ENCODE measurements at regions of chr12 and their contacts with region 1.

Region 1: DNA sequence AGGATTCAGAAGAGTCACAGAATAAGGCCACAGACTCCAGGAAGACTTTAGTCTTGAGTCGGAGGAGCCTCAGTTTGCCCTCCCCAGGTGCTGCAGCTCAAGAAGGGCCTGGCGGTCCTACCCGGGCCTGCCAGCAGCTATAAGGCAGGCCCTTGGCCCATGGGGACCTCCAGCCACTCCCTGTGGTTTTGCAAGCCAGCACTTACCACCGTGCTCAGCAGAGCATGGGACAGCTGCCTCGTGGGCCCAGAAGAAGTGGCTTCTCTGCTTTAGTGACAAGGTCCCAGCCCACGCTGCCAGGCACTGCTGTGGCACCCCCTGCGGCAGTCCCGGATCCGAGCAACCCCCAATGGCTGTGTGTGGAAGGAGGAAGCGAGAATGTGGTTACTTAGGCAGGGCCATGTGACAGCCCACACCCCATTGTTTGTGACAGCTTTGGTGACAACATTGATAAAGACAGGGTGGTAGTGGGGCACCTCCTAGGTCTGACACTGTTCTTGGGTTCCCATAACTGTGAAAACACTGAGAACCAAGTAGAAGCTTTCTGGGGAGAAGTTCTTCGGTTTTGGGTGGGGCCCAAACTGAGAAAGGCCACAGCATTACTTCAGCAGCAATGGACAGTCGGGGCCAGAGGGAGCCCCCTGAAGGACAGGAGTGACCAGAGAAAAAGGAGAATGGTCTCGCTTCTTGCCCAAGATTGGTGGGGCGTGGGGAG is at the start of gene SELPLG:
- DNase-seq: peak; percentile 82
- H3K4me3 Mint-ChIP-seq: peak within 1 kb of the TSS; percentile 94
- H3K27ac Mint-ChIP-seq: peak within 1 kb of the TSS; percentile 99
- H3K4me1 Mint-ChIP-seq: peaks cover 69% of the 10 kb centered on the region
- H3K27me3 Mint-ChIP-seq: no peaks in the 10 kb centered on the region
- total RNA-seq, gene SELPLG: 51.9 and 53.5 TPM in 2 replicates

Region 2: DNA sequence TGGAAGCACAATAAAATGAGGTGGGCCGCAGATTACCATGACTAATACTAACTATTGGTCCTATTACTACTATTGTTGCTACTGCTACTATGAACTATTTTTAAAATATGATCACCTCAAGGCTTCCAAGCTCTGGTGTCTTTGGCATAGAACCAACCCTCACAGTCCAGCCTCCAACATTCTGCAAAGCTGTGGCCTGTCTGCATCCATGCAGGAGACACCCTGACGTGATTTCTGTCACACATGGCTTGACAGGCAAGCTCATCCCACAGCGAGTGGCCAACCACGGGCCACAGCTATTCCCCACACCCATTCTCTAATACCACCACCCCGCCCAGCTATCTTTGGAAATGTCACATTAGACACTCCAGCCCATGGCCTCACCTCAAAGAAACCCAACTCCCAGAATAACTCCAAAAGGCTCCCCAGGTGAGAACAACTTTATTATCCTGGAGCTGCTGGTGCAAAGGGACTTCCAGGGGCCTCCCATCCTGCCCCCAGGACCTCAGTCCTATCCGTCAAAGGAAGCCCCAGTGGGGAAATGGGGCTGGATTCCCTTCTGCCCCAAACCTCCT is 56.9 kb before region 1 on chr12:
- intact Hi-C with region 1: no loop called
- DNase-seq: no peak
- H3K4me3 Mint-ChIP-seq: no peak overlapping the region
- H3K27ac Mint-ChIP-seq: no peak overlapping the region
- H3K4me1 Mint-ChIP-seq: peaks cover 50% of the 10 kb centered on the region
- H3K27me3 Mint-ChIP-seq: peaks cover 4% of the 10 kb centered on the region

Region 3: GRCh38 chr12:108618079-108618952 is 15.4 kb before region 1 on chr12:
- intact Hi-C with region 1: loop called (anchors 1 kb)
- DNase-seq: peak; percentile 69
- H3K4me3 Mint-ChIP-seq: no peak overlapping the region
- H3K27ac Mint-ChIP-seq: peak overlapping the region; percentile 57
- H3K4me1 Mint-ChIP-seq: peaks cover 57% of the 10 kb centered on the region
- H3K27me3 Mint-ChIP-seq: peaks cover 2% of the 10 kb centered on the region

Region 4: GRCh38 chr12:108664338-108665258 is 30.9 kb after region 1 on chr12:
- intact Hi-C with region 1: loop called (anchors 1 kb)
- DNase-seq: peak; percentile 79
- H3K4me3 Mint-ChIP-seq: no peak overlapping the region
- H3K27ac Mint-ChIP-seq: peak overlapping the region; percentile 72
- H3K4me1 Mint-ChIP-seq: peaks cover 17% of the 10 kb centered on the region
- H3K27me3 Mint-ChIP-seq: no peaks in the 10 kb centered on the region

Region 5: GRCh38 chr12:108731105-108731865 is 97.6 kb after region 1 on chr12 and contains the start of gene CORO1C:
- intact Hi-C with region 1: loop called (anchors 1 kb)
- DNase-seq: peak; percentile 96
- H3K4me3 Mint-ChIP-seq: peak within 1 kb of the TSS; percentile 89
- H3K27ac Mint-ChIP-seq: peak within 1 kb of the TSS; percentile 94
- H3K4me1 Mint-ChIP-seq: peaks cover 38% of the 10 kb centered on the region
- H3K27me3 Mint-ChIP-seq: peaks cover 16% of the 10 kb centered on the region
- total RNA-seq, gene CORO1C: 46.1 and 49.7 TPM in 2 replicates

Region 6: DNA sequence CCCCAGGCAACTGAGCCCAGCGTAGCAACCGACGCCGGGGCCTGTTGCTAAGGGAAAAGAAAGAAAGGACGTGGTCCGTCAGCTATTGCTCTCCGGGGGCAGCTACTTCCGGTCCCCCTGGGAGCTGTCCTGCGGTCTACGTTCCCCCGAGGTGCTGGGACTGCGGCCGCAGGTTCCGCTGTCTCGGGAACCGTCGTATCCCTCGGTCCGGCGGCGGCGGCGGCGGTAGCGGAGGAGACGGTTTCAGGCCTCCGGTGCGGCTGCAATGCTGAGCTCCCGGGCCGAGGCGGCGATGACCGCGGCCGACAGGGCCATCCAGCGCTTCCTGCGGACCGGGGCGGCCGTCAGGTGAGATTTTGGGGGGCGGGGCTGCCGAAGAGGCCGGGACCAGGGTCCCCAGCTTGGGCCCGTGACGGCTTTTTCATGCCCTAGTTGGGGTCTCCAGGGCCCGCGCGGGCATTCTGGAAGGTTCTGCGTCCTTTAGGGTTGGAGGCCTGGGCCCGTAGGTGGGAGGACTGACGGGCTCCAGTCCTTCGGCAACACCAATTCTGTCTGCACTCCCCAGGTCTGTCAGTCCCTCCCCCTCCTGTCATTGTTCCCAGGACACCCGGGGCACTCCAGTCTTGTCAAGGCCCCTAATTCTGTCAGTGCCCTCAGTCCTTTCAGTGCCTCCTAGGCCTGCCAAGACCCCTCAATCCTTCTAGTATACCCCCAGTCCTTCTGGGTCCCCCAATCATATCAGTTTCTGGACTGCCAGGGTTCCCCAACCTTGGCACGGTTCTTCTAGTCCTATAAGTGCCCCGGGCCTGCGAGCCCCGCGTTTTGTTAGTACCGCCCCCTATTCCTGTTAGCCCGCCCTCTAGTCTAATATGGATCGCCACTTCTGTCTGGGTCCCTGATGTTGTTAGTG is 419.0 kb after region 1 on chr12 and contains the start of gene USP30:
- intact Hi-C with region 1: loop called (anchors 5 kb)
- DNase-seq: peak; percentile 77
- H3K4me3 Mint-ChIP-seq: peak within 1 kb of the TSS; percentile 92
- H3K27ac Mint-ChIP-seq: peak within 1 kb of the TSS; percentile 92
- H3K4me1 Mint-ChIP-seq: peaks cover 19% of the 10 kb centered on the region
- H3K27me3 Mint-ChIP-seq: no peaks in the 10 kb centered on the region
- total RNA-seq, gene USP30: 9.0 and 10.5 TPM in 2 replicates